HepG2 (cell line): ENCODE measurements at regions of chr17 and their contacts with region 1.

Region 1: GRCh38 chr17:4966844-4967538 is 626 bp downstream of the SPAG7 start:
- DNase-seq: peak; percentile 99
- ATAC-seq: peak; percentile 91
- H3K4me3 ChIP-seq: peak overlapping the region; percentile 72 to 88 (median 77)
- H3K27ac ChIP-seq: peak overlapping the region; percentile 92
- H3K4me1 ChIP-seq: peaks cover 31% of the 10 kb centered on the region
- H3K27me3 ChIP-seq: no peaks in the 10 kb centered on the region; a peak in 1 of 5 replicates
- CTCF ChIP-seq: no peak
- EP300 ChIP-seq: no peak
- POLR2A ChIP-seq: no peak; a peak in 1 of 4 replicates
- RAD21 ChIP-seq: no peak

Region 2: GRCh38 chr17:4721203-4722135 is 245.5 kb before region 1 on chr17:
- CTCF ChIA-PET with region 1: no interaction called
- POLR2A ChIA-PET with region 1: interaction called, 11 read pairs
- in situ Hi-C with region 1: no loop called
- intact Hi-C with region 1: loop called (anchors 10 kb)
- DNase-seq: peak; percentile 95
- ATAC-seq: peak; percentile 90
- H3K4me3 ChIP-seq: peak overlapping the region in 1 of 3 experiments; percentile 58; a peak in 3 of 6 replicates
- H3K27ac ChIP-seq: peak overlapping the region; percentile 68
- H3K4me1 ChIP-seq: peaks cover 35% of the 10 kb centered on the region
- H3K27me3 ChIP-seq: no peaks in the 10 kb centered on the region
- CTCF ChIP-seq: no peak
- EP300 ChIP-seq: peak in 1 of 2 experiments; percentile 85; a peak in 2 of 4 replicates
- POLR2A ChIP-seq: peak; percentile 50 to 69; a peak in 3 of 4 replicates
- RAD21 ChIP-seq: 0 out of 2 replicates have a peak, but pooled peaks have one; percentile 12

Region 3: DNA sequence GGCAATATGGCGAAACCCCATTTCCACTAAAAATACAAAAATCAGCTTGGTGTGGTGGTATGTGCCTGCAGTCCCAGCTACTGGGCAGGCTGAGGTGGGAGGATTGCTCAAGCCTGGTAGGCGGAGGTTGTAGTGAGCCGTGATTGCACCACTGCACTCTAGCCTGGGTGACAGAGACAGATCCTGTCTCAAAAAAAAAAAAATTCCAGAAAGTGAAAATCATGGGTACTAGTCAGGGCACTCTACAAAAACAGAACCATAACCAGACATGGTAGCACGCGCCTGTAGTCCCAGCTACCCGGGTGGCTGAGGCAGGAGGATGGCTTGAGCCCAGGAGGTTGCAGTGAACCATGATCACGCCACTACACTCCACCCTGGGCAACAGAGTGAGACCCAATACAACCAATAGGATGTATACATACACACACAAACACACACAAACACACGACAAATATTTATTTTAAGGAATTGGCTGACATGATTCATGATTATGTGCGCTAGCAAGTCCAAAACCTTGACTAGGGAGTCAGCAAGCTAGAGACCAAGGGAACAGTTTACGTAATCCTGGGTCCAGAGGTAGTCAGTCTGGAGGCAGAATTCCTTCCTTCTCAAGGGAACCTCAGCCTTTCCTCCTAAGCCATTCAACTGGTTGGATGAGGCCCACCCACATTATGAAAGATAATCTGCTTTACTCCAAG is 46.5 kb before region 1 on chr17:
- CTCF ChIA-PET with region 1: no interaction called
- POLR2A ChIA-PET with region 1: interaction called, 26 read pairs
- in situ Hi-C with region 1: no loop called
- intact Hi-C with region 1: no loop called
- DNase-seq: peak; percentile 65
- ATAC-seq: peak; percentile 95
- H3K4me3 ChIP-seq: peak overlapping the region; percentile 14 to 57 (median 26)
- H3K27ac ChIP-seq: peak overlapping the region; percentile 53
- H3K4me1 ChIP-seq: peaks cover 22% of the 10 kb centered on the region
- H3K27me3 ChIP-seq: no peaks in the 10 kb centered on the region
- CTCF ChIP-seq: no peak
- EP300 ChIP-seq: no peak
- POLR2A ChIP-seq: peak in 1 of 2 experiments; percentile 14; a peak in 1 of 4 replicates
- RAD21 ChIP-seq: no peak

Region 4: GRCh38 chr17:4939796-4940624 is 27.0 kb before region 1 on chr17 and contains the starts of genes RNF167 and SLC25A11:
- CTCF ChIA-PET with region 1: no interaction called
- POLR2A ChIA-PET with region 1: interaction called, 273 read pairs
- in situ Hi-C with region 1: no loop called
- intact Hi-C with region 1: no loop called
- DNase-seq: peak; percentile 100
- ATAC-seq: peak; percentile 79
- H3K4me3 ChIP-seq: peak within 1 kb of the TSS; percentile 91 to 97 (median 93)
- H3K27ac ChIP-seq: peak within 1 kb of the TSS; percentile 96
- H3K4me1 ChIP-seq: peaks cover 30% of the 10 kb centered on the region
- H3K27me3 ChIP-seq: no peaks in the 10 kb centered on the region; a peak in 1 of 5 replicates
- CTCF ChIP-seq: no peak
- EP300 ChIP-seq: no peak
- POLR2A ChIP-seq: peak; percentile 67 to 90
- RAD21 ChIP-seq: peak; percentile 57
- total RNA-seq, gene RNF167: 35.7 and 44.1 TPM in 2 replicates
- total RNA-seq, gene SLC25A11: 47.2 and 47.9 TPM in 2 replicates

Region 5: GRCh38 chr17:4956493-4957061 is 10.4 kb before region 1 on chr17:
- CTCF ChIA-PET with region 1: no interaction called
- POLR2A ChIA-PET with region 1: interaction called, 273 read pairs
- in situ Hi-C with region 1: no loop called
- intact Hi-C with region 1: no loop called
- DNase-seq: no peak
- ATAC-seq: peak; percentile 16; the same call in 2 of the 3 replicates
- H3K4me3 ChIP-seq: no peak overlapping the region
- H3K27ac ChIP-seq: no peak overlapping the region
- H3K4me1 ChIP-seq: peaks cover 27% of the 10 kb centered on the region
- H3K27me3 ChIP-seq: no peaks in the 10 kb centered on the region
- CTCF ChIP-seq: peak; percentile 37
- EP300 ChIP-seq: no peak
- POLR2A ChIP-seq: no peak
- RAD21 ChIP-seq: no peak

Region 6: GRCh38 chr17:4986951-4987766 is 20.2 kb after region 1 on chr17 and contains the start of gene CAMTA2:
- CTCF ChIA-PET with region 1: no interaction called
- POLR2A ChIA-PET with region 1: interaction called, 78 read pairs
- in situ Hi-C with region 1: no loop called
- intact Hi-C with region 1: no loop called
- DNase-seq: peak; percentile 72
- ATAC-seq: peak; percentile 79
- H3K4me3 ChIP-seq: peak within 1 kb of the TSS; percentile 80 to 87 (median 84)
- H3K27ac ChIP-seq: peak within 1 kb of the TSS; percentile 55
- H3K4me1 ChIP-seq: peaks cover 30% of the 10 kb centered on the region
- H3K27me3 ChIP-seq: no peaks in the 10 kb centered on the region
- CTCF ChIP-seq: peak; percentile 87
- EP300 ChIP-seq: peak in 1 of 2 experiments; percentile 34; a peak in 2 of 4 replicates
- POLR2A ChIP-seq: peak in 1 of 2 experiments; percentile 12; a peak in 2 of 4 replicates
- RAD21 ChIP-seq: peak; percentile 85
- total RNA-seq, gene CAMTA2: 4.0 and 4.1 TPM in 2 replicates